ENCODE measurements at regions of chr14 and their contacts with region 1.

Region 1: DNA sequence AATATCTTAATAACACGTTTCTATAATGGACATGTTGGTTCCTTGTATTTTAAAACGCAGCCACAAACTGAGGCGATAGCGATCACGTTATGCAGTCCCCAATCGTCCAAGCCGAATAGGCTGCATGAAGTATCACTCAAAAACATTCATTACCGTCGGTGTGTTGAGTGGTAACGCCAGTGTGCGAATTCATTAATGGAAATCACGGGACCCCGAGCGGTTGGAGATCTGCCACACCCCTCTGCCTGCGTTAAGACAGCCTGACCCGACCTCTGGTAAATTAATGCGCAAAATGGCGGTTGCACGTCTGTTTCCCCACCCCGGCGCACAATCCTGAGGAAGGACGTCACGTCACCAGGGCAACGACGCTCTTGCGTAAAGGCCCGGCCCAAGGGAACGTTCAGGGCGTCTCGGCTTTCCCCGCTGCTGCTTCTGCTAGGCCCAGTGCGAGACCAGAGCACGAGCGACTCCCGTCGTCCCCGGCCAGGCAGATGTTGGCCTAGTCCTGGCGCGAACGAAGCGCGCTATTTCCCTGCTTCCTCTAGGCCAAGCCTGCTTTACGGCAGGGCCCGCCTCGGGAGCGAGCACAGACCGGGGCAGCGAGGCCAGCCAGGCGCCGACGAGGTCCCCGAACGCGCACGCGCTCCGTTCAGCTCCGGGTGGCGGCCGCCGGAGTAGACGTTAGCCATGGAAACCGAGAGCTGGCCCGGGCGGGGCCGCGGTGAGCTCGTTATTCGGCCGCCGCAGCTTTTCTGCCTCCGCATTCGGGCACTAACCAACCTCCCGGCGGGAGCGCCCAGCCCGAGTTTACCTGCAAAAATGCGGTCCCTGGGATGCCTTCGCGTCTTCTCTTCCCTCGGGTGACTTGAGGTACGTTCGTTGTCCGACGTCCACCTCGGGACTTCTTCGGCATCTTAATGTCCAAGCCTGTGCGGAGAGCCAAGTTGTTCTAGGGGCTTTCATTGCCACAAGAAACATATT is at the start of gene PCNX4:
- DNase-seq: peak; percentile 93
- H3K4me3 Mint-ChIP-seq: peak within 1 kb of the TSS; percentile 79
- H3K27ac Mint-ChIP-seq: peak within 1 kb of the TSS; percentile 77
- H3K4me1 Mint-ChIP-seq: peaks cover 25% of the 10 kb centered on the region
- H3K27me3 Mint-ChIP-seq: no peaks in the 10 kb centered on the region
- CTCF ChIP-seq: no peak
- total RNA-seq, gene PCNX4: 40.1 and 41.1 TPM in 2 replicates

Region 2: GRCh38 chr14:60249321-60250256 is 157.7 kb after region 1 on chr14:
- CTCF ChIA-PET with region 1: interaction called, 3 read pairs
- intact Hi-C with region 1: loop called (anchors 5 kb)
- DNase-seq: peak; percentile 76
- H3K4me3 Mint-ChIP-seq: peak overlapping the region; percentile 99
- H3K27ac Mint-ChIP-seq: peak overlapping the region; percentile 99
- H3K4me1 Mint-ChIP-seq: peaks cover 42% of the 10 kb centered on the region
- H3K27me3 Mint-ChIP-seq: no peaks in the 10 kb centered on the region
- CTCF ChIP-seq: no peak

Region 3: DNA sequence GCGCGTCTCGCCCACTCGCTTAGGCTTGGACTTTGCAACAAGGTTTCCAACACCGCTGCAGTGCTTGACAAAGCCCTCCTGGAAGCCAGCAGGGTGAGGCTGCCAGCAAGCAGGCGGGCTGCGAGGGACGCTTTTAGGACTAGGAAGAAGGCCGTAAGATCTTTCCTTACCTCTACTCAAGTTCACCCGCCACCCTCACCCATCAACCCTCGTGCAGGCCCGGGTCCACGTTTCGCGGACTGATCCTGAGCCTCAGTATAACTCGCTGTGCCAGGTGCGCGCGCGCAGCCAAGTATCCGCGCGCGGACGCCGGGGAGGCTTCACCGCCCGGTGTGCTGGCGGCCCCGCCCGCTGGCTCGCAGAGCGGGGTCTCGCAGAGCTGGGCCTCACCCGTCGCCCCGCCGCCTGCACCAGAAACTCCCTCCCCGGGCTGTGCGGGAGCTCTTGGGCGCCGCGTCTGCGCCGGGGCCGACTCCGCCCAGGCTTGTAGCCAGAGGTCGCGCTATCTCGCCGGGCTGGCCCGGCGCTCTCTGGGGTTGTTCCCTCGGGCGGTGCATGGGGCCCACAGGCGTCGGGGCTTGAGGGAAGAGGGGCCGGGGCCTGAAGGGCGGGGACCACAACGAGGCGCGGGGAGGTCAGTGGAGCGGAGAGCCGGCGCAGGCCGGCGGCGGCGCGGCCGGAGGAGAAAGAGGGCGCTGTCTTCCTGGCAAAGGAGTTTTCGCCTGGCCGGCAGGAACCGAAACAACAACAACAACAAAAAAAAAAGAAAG is 565.0 kb after region 1 on chr14:
- CTCF ChIA-PET with region 1: no interaction called
- intact Hi-C with region 1: no loop called
- DNase-seq: peak; percentile 76
- H3K4me3 Mint-ChIP-seq: peak overlapping the region; percentile 91
- H3K27ac Mint-ChIP-seq: peak overlapping the region; percentile 72
- H3K4me1 Mint-ChIP-seq: no peaks in the 10 kb centered on the region
- H3K27me3 Mint-ChIP-seq: peaks cover 31% of the 10 kb centered on the region
- CTCF ChIP-seq: peak; percentile 12

Measured in Calu3 (cell line).